Mammary epithelial cell (primary cell): ENCODE measurements at regions of chr5 and their contacts with region 1.

Region 1: DNA sequence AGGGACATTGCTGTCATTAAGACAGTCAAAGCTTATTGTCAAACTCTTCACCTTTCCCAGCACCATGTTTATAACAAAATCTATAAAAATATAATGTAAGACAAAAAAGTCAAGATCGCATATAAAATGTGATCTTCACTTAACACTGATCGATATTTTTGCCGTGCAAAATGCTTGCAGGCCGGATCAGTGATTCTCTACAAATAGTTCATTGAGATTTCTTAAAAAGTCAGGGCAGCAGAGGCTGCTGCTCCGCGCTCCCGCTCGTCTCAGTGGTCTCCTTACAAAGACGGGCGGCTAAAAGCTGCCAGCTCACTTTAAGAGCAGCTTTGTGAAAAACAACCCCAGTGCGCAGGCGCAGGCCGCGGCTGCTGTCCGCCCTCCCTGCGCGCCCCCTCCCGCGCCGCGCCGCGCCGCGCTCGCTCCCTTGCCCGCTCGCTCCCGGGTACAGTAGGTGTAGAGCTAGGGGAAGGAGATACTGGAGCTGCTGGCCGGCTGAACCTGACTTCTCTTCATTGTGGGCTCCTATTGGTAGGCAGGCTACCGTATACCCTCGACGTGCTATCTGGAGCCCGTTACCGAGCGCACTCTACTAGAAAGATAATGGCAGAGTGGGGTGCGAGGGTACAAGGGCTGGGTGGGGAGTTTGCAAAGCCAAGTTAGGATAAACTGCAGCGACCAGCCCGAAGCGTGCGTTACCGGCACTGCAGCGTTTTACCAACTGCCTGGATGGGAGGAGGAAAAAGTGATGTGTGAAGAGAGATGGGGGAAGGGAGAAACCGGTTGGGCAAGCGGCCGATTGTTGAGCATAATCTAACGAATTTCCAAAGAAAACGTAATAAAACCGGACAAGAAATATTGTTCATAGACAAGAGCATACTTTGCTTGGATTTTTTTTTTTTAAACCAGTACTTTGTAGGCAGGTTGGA is at the start of gene ARRDC3:
- DNase-seq: peak; percentile 94
- H3K4me3 ChIP-seq: peak within 1 kb of the TSS; percentile 65 to 100 (median 91)
- H3K27ac ChIP-seq: peak within 1 kb of the TSS; percentile 100
- H3K4me1 ChIP-seq: peaks cover 3% of the 10 kb centered on the region
- H3K27me3 ChIP-seq: no peaks in the 10 kb centered on the region
- CTCF ChIP-seq: no peak
- total RNA-seq, gene ARRDC3: 26.2 to 48.3 TPM

Region 2: DNA sequence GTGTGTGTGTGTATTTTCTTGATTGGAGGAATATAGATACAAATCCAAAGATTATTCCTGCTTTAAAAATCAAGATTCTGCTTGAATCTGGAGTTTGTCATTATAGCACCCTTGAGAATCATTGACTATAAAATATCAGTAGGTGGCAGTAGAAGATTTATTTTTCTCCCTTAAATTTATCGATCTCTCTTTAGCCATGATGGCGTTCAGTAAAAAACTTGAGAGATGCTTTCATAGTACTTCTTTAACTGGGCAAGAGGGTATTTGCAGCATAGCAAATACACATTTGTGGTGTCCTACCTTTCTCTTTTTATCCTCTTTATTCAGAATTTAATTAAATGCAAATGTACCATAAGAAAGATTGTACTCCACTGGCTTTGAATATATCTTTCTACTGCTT is 517.0 kb before region 1 on chr5:
- CTCF ChIA-PET with region 1: interaction called, 4 read pairs
- dilution Hi-C with region 1: no loop called
- in situ Hi-C with region 1: loop called in 1 of 2 experiments (anchors 25 kb)
- intact Hi-C with region 1: loop called (anchors 2 kb)
- DNase-seq: no peak
- H3K4me3 ChIP-seq: no peak overlapping the region
- H3K27ac ChIP-seq: no peak overlapping the region
- H3K4me1 ChIP-seq: no peaks in the 10 kb centered on the region
- H3K27me3 ChIP-seq: no peaks in the 10 kb centered on the region
- CTCF ChIP-seq: peak; percentile 41 to 48

Region 3: DNA sequence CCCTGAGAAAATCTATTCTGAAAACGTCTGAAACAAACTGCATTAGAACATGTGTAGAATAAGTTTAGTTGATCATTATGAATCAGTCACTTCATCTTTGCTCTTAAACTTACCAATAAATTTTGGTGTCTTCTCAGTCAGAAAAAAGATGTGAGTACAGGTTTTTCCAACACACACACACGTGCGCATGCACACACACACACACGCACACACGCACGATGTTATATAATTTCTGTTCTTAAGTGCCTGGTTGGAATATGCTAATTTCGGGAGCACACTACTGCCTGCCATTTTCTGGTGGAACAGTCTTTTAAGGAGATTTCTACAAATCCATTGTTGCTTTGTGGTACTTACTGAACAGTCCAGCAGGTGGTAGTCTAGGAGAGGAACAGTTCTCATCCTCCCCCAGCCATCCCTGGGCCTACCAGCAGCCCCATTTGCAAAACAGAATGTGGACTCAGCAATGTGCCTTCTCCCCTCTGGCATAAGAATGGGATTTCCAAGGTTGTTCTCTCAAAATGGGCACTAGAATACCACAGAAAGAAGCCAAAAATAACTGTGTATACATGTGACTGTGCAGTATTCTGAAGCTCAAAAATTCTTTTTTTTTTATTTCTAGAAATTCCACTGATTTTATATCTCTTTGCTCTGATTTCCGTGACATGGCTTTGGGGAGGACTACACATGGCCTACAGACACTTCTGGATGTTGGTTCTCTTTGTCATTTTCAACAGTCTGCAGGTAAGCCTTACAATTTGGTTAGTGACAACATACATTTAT is 281.5 kb before region 1 on chr5:
- CTCF ChIA-PET with region 1: no interaction called
- dilution Hi-C with region 1: no loop called
- in situ Hi-C with region 1: loop called (anchors 5 kb)
- intact Hi-C with region 1: loop called (anchors 1 kb)
- DNase-seq: peak; percentile 61
- H3K4me3 ChIP-seq: no peak overlapping the region
- H3K27ac ChIP-seq: no peak overlapping the region
- H3K4me1 ChIP-seq: no peaks in the 10 kb centered on the region
- H3K27me3 ChIP-seq: no peaks in the 10 kb centered on the region
- CTCF ChIP-seq: peak; percentile 68 to 87

Region 4: DNA sequence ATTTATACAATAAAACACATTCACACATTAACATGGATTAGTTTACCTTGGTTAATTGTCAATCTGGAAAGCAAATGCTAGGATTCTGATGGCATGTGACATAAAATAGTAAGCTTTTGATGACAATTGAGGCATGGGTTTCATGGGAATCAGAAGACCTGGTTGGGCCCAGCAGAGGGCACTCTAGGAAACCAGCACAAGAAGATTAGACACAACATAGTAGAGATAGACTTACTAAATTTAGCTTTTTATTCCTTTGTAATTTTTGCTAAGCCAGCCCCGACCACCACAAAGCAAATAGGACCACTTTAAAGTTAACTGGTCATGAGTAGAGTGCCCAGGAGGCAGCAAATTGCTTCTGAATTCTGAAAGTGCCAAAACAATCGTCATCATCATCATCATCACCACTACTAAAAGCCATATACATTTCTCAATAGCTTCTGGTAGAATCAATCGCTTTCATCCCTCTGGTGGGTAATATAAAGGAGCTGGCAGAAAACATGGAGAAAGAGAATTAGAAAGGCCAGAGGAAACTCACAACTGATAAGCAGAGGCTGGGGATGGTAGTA is 163.4 kb before region 1 on chr5:
- CTCF ChIA-PET with region 1: interaction called, 7 read pairs
- dilution Hi-C with region 1: loop called (anchors 5 kb)
- in situ Hi-C with region 1: loop called (anchors 5 kb)
- intact Hi-C with region 1: no loop called
- DNase-seq: no peak
- H3K4me3 ChIP-seq: no peak overlapping the region
- H3K27ac ChIP-seq: no peak overlapping the region
- H3K4me1 ChIP-seq: peaks cover 6% of the 10 kb centered on the region
- H3K27me3 ChIP-seq: no peaks in the 10 kb centered on the region
- CTCF ChIP-seq: peak; percentile 13 to 18

Region 5: GRCh38 chr5:91280362-91281269 is 102.7 kb before region 1 on chr5:
- CTCF ChIA-PET with region 1: interaction called, 3 read pairs
- dilution Hi-C with region 1: loop called (anchors 5 kb)
- in situ Hi-C with region 1: no loop called
- intact Hi-C with region 1: loop called (anchors 1 kb)
- DNase-seq: peak; percentile 96
- H3K4me3 ChIP-seq: peak overlapping the region; percentile 47 to 66 (median 59)
- H3K27ac ChIP-seq: peak overlapping the region; percentile 98
- H3K4me1 ChIP-seq: peaks cover 31% of the 10 kb centered on the region
- H3K27me3 ChIP-seq: no peaks in the 10 kb centered on the region
- CTCF ChIP-seq: no peak

Region 6: GRCh38 chr5:91419571-91420537 is 36.6 kb after region 1 on chr5:
- CTCF ChIA-PET with region 1: interaction called, 11 read pairs
- dilution Hi-C with region 1: no loop called
- in situ Hi-C with region 1: no loop called
- intact Hi-C with region 1: loop called (anchors 1 kb)
- DNase-seq: peak; percentile 29
- H3K4me3 ChIP-seq: no peak overlapping the region
- H3K27ac ChIP-seq: no peak overlapping the region
- H3K4me1 ChIP-seq: no peaks in the 10 kb centered on the region
- H3K27me3 ChIP-seq: no peaks in the 10 kb centered on the region
- CTCF ChIP-seq: peak; percentile 32 to 54

Region 7: GRCh38 chr5:91434348-91434747 is 51.1 kb after region 1 on chr5:
- CTCF ChIA-PET with region 1: no interaction called
- dilution Hi-C with region 1: no loop called
- in situ Hi-C with region 1: no loop called
- intact Hi-C with region 1: no loop called
- DNase-seq: no peak
- H3K4me3 ChIP-seq: no peak overlapping the region
- H3K27ac ChIP-seq: no peak overlapping the region
- H3K4me1 ChIP-seq: no peaks in the 10 kb centered on the region
- H3K27me3 ChIP-seq: no peaks in the 10 kb centered on the region
- CTCF ChIP-seq: no peak

Region 8: DNA sequence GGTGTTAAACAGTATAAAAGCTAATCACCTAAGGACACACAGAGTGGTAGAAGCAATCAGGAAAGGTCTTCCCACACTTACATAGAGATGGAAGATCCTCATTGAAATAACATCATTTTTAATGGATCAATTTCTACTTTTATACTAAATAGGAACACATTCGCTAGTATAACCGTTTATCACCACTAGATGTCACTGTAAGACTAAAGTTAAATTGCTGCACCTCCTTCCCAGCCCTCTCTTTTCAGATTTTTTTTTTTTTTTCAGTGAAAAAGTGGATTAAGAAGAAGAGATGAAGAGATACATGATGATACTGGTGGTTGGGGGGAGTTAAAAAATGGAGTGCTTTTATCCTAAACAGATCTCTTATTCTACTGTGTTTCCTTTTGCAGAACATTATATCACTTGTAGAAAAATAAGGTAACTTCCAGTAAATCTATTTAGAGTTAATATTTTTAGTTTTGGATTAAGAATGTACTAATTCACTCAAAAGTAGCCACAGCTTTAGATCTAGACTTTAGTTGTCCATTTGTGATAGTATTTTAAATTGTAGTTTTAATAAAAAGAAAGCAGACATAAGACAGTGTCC is 116.7 kb after region 1 on chr5:
- CTCF ChIA-PET with region 1: no interaction called
- dilution Hi-C with region 1: no loop called
- in situ Hi-C with region 1: no loop called
- intact Hi-C with region 1: no loop called
- DNase-seq: peak; percentile 29
- H3K4me3 ChIP-seq: no peak overlapping the region
- H3K27ac ChIP-seq: no peak overlapping the region
- H3K4me1 ChIP-seq: no peaks in the 10 kb centered on the region
- H3K27me3 ChIP-seq: no peaks in the 10 kb centered on the region
- CTCF ChIP-seq: peak; percentile 57 to 59

Region 9: DNA sequence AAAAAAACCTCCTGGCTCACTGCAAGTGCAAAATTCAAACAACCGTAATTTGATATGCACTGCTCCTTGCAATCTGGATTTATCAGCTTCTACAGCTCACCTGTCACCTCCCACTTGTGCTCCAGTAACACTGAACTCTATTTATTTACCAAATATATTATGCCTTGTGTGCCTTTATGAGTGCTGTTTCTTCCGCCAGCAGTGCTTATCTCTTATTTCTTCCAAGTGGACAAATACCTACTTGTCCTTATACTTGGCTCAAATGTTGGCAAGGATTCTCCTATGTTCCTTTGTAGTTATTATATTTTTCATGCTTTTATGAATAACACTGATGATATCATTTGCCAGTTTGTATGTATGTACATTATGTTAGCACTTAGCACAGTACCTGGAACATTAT is 145.5 kb after region 1 on chr5:
- CTCF ChIA-PET with region 1: no interaction called
- dilution Hi-C with region 1: no loop called
- in situ Hi-C with region 1: no loop called
- intact Hi-C with region 1: no loop called
- DNase-seq: no peak
- H3K4me3 ChIP-seq: no peak overlapping the region
- H3K27ac ChIP-seq: no peak overlapping the region
- H3K4me1 ChIP-seq: no peaks in the 10 kb centered on the region
- H3K27me3 ChIP-seq: no peaks in the 10 kb centered on the region
- CTCF ChIP-seq: no peak

Region 10: DNA sequence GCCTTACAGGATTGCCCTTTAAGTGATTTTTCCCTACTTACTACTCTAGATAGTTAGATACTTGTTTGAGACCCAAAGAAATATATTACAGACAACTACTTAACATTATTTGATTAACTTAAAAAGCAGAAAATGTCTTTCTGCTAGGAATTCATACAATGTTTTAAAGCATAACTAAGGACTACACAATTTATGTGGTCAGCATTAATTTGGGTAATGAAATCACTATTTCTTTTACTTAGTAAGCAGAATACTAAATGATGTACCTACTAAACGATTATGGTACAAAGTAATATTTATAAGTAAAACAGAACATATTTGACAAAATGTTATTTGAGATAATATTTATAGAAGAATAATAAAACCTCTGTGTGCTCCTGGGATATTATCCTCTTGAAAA is 371.7 kb after region 1 on chr5:
- CTCF ChIA-PET with region 1: no interaction called
- dilution Hi-C with region 1: no loop called
- in situ Hi-C with region 1: no loop called
- intact Hi-C with region 1: no loop called
- DNase-seq: no peak
- H3K4me3 ChIP-seq: no peak overlapping the region
- H3K27ac ChIP-seq: no peak overlapping the region
- H3K4me1 ChIP-seq: no peaks in the 10 kb centered on the region
- H3K27me3 ChIP-seq: no peaks in the 10 kb centered on the region
- CTCF ChIP-seq: no peak